ENCODE measurements at regions of chr2 and their contacts with region 1.

Region 1: GRCh38 chr2:237744613-237745249 is 53.8 kb upstream of the RBM44 start:
- DNase-seq: peak; percentile 80
- ATAC-seq: peak; percentile 86
- H3K4me3 ChIP-seq: no peak overlapping the region
- H3K4me3 Mint-ChIP-seq: no peak overlapping the region
- H3K27ac ChIP-seq: peak overlapping the region in 1 of 2 donors; percentile 29
- H3K27ac Mint-ChIP-seq: peak overlapping the region; percentile 80
- H3K4me1 ChIP-seq: peaks cover 0 to 2% of the 10 kb centered on the region in 2 donors
- H3K4me1 Mint-ChIP-seq: peaks cover 40% of the 10 kb centered on the region
- H3K27me3 ChIP-seq: no peaks in the 10 kb centered on the region
- H3K27me3 Mint-ChIP-seq: no peaks in the 10 kb centered on the region
- CTCF ChIP-seq: peak; percentile 93

Region 2: DNA sequence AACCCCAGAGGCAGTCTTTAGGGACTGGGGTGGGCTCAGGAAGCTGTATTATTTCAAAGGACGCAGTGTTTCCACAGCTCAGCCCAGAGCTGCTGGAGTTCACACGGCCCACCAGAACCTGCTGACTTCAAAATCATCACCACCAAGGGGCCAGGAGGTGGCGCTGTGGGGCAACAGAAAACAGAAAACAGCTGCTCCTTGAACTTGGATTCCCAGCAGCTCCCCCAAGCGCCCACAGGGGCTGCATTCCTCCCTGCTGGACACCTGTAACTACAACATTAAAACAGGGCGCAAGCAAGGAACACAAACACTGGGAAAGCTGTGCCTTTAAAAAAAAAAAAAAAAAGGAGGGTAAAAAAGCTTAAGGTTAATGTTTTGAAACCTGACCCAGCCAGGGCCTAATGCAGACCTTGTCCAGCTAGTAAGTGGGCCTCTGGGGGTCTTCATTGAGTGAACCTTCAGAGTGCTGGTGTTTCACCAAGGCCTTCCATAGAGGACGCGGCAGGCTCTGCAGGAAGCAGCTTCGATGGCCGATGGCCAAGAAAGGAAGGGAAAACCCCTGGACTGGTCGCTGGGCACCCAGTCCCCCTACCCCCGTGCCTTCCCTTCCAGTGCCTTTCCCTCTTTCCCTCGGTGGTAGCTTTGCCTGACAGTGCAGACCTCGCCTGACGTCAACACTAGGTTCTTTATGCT is 231.8 kb before region 1 on chr2:
- CTCF ChIA-PET with region 1: interaction called, 80 read pairs
- POLR2A ChIA-PET with region 1: no interaction called
- intact Hi-C with region 1: no loop called
- DNase-seq: peak; percentile 84
- ATAC-seq: peak; percentile 86
- H3K4me3 ChIP-seq: no peak overlapping the region
- H3K4me3 Mint-ChIP-seq: no peak overlapping the region
- H3K27ac ChIP-seq: no peak overlapping the region
- H3K27ac Mint-ChIP-seq: no peak overlapping the region
- H3K4me1 ChIP-seq: no peaks in the 10 kb centered on the region
- H3K4me1 Mint-ChIP-seq: no peaks in the 10 kb centered on the region
- H3K27me3 ChIP-seq: peaks cover 0 to 7% (median 3%) of the 10 kb centered on the region in 4 experiments
- H3K27me3 Mint-ChIP-seq: peaks cover 13% of the 10 kb centered on the region
- CTCF ChIP-seq: peak; percentile 91

Region 3: GRCh38 chr2:237581751-237582746 is 162.7 kb before region 1 on chr2:
- CTCF ChIA-PET with region 1: interaction called, 88 read pairs
- POLR2A ChIA-PET with region 1: no interaction called
- intact Hi-C with region 1: no loop called
- DNase-seq: peak; percentile 61
- ATAC-seq: peak; percentile 68
- H3K4me3 ChIP-seq: no peak overlapping the region
- H3K4me3 Mint-ChIP-seq: no peak overlapping the region
- H3K27ac ChIP-seq: no peak overlapping the region
- H3K27ac Mint-ChIP-seq: no peak overlapping the region
- H3K4me1 ChIP-seq: peaks cover 0 to 4% of the 10 kb centered on the region in 2 donors
- H3K4me1 Mint-ChIP-seq: peaks cover 2% of the 10 kb centered on the region
- H3K27me3 ChIP-seq: peaks cover 0 to 7% (median 0%) of the 10 kb centered on the region in 4 experiments
- H3K27me3 Mint-ChIP-seq: peaks cover 2% of the 10 kb centered on the region
- CTCF ChIP-seq: peak; percentile 45

Region 4: DNA sequence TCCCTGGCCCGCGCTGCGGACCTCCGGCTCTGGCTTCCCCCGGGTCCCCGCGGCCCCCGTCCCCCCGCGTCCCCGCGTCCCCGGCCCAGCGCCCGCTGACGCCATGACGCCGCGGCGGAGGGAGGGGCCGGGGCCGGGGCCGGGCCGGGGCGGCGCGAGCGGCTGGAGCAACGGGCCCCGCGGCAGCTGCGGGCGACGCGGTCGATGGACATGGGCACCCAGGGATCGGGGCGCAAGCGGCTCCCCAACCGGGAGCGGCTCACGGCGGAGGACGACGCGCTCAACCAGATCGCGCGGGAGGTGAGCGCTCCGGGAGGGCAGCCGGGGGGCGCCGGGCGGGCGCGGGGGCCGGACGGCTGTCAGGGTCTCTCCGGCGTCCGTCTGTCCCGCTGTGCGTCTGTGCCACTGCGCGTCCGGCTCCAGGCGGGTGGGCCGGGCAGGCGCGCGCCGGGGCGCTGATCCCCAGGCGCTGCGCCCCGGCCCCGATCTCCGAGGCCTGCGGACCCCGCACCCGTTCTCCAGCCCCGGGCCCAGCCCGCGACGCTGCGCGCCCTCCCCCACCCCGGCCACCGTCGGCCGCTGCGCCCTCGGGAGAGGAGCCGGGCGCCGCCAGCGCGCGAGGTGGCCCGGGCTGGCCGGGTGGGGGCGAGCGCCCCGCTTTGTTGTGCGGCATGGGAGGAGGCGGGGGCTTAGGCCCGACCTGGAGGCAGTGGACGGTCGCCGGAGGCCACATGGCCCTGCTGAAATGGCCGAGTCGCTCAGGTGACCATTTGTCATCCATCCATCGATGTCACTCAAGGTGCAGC is 117.1 kb before region 1 on chr2 and contains the start of gene LRRFIP1:
- CTCF ChIA-PET with region 1: interaction called, 46 read pairs
- POLR2A ChIA-PET with region 1: no interaction called
- intact Hi-C with region 1: loop called (anchors 1 kb)
- DNase-seq: peak; percentile 45
- ATAC-seq: peak; percentile 74
- H3K4me3 ChIP-seq: peak within 1 kb of the TSS; percentile 22 to 59 (median 44)
- H3K4me3 Mint-ChIP-seq: peak within 1 kb of the TSS; percentile 88
- H3K27ac ChIP-seq: no peak within 1 kb of the TSS
- H3K27ac Mint-ChIP-seq: peak within 1 kb of the TSS; percentile 32
- H3K4me1 ChIP-seq: peaks cover 10 to 18% of the 10 kb centered on the region in 2 donors
- H3K4me1 Mint-ChIP-seq: peaks cover 24% of the 10 kb centered on the region
- H3K27me3 ChIP-seq: peaks cover 0 to 16% (median 11%) of the 10 kb centered on the region in 4 experiments
- H3K27me3 Mint-ChIP-seq: peaks cover 30% of the 10 kb centered on the region
- CTCF ChIP-seq: peak; percentile 18
- total RNA-seq, gene LRRFIP1: 139 and 141 TPM in 2 replicates

Region 5: GRCh38 chr2:237723602-237724001 is 21.1 kb before region 1 on chr2:
- CTCF ChIA-PET with region 1: interaction called, 13 read pairs
- POLR2A ChIA-PET with region 1: interaction called, 4 read pairs
- intact Hi-C with region 1: no loop called
- DNase-seq: peak; percentile 46
- ATAC-seq: peak; percentile 69
- H3K4me3 ChIP-seq: no peak overlapping the region
- H3K4me3 Mint-ChIP-seq: no peak overlapping the region
- H3K27ac ChIP-seq: peak overlapping the region in 1 of 2 donors; percentile 8
- H3K27ac Mint-ChIP-seq: peak overlapping the region; percentile 63
- H3K4me1 ChIP-seq: peaks cover 7 to 14% of the 10 kb centered on the region in 2 donors
- H3K4me1 Mint-ChIP-seq: peaks cover 33% of the 10 kb centered on the region
- H3K27me3 ChIP-seq: no peaks in the 10 kb centered on the region
- H3K27me3 Mint-ChIP-seq: no peaks in the 10 kb centered on the region
- CTCF ChIP-seq: no peak

Region 6: DNA sequence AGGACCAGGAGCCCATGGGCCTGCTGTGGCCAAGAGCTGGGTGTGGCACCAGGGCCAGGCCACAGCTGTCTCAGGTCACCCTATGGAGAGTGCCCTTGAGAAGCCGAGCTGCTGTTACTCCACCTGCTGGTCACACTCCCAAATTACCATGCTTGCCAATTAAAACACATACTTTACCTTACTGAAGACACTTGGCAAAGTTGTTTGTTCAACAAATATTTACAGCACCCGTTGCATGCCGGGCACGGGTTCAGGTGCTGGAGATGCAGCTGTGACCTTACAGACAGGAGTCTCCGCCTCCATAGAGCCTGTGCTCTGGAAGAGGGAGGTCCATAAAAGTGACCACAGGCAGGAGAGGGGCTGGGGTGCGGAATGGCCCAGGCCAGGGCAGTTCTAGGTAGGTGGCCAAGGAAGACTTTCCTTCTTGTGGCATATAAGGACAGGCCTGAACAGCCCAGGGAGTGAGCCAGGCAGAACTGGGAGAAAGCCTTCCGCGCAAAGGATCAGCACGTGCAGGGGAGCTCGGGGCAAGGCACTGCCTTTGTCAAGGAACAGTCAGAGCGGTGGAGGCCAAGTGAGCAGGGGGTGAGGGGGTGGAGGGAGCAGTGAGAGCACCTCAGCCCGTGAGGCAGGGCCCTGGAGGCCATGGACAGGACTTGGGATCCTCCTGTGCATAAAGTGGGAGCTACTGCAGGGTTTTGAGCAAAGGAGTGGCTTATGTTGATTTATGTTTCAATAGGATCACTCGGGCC is 30.2 kb after region 1 on chr2:
- CTCF ChIA-PET with region 1: interaction called, 13 read pairs
- POLR2A ChIA-PET with region 1: no interaction called
- intact Hi-C with region 1: no loop called
- DNase-seq: peak; percentile 64
- ATAC-seq: peak; percentile 67
- H3K4me3 ChIP-seq: no peak overlapping the region
- H3K4me3 Mint-ChIP-seq: no peak overlapping the region
- H3K27ac ChIP-seq: no peak overlapping the region
- H3K27ac Mint-ChIP-seq: peak overlapping the region; percentile 41
- H3K4me1 ChIP-seq: no peaks in the 10 kb centered on the region
- H3K4me1 Mint-ChIP-seq: no peaks in the 10 kb centered on the region
- H3K27me3 ChIP-seq: no peaks in the 10 kb centered on the region
- H3K27me3 Mint-ChIP-seq: no peaks in the 10 kb centered on the region
- CTCF ChIP-seq: peak; percentile 75

Measured in B cell (primary cell).